Mammary epithelial cell (primary cell): ENCODE measurements at regions of chr1 and their contacts with region 1.

Region 1: DNA sequence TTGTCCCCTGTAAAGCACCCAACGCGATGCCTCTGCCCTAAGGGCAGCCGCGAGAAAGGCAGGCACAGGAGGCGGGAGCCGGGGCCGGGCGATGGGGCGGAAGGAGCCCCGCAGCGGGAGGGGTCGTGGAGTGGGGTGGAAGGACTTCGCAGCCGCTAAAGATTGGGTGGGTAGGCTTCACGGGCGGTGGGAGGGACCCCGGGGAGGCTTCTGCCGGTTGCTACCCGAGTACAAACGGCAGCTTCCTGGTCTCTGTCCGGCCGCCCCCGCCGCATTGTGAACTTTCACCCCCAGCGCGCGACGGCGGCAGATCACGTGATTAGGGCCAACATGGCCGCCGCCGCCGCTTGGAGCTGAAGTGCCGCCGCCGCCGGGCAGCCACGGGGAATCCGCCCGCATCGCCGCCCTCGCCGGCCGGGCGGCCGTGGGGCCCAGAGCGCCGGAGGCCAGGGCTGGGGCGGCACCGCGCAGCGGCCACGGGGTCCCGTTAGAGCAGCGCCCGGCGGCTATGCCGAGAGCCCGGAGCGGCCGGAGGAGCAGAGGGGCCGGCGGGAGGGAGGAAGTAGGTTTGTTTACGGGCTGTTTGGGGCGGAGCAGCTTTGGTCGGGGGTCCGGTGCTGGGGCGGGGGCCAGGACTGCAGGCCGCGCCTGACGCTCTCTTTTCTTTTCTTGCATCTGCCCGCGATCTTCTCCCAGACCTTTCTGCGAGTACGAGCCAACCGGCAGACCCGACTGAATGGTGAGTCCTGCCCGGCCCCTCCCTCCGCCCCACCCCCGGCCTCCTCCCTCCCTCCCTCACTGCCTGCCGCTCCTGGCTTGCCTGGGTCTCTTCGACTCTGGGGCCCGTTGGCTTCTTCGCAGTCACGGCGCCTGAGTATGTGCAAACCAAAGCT is 42.4 kb downstream of the TMEM53 start:
- DNase-seq: peak; percentile 77
- H3K4me3 ChIP-seq: peak overlapping the region; percentile 58 to 76 (median 69)
- H3K27ac ChIP-seq: peak overlapping the region; percentile 71
- H3K4me1 ChIP-seq: peaks cover 13% of the 10 kb centered on the region
- H3K27me3 ChIP-seq: no peaks in the 10 kb centered on the region
- CTCF ChIP-seq: no peak

Region 2: DNA sequence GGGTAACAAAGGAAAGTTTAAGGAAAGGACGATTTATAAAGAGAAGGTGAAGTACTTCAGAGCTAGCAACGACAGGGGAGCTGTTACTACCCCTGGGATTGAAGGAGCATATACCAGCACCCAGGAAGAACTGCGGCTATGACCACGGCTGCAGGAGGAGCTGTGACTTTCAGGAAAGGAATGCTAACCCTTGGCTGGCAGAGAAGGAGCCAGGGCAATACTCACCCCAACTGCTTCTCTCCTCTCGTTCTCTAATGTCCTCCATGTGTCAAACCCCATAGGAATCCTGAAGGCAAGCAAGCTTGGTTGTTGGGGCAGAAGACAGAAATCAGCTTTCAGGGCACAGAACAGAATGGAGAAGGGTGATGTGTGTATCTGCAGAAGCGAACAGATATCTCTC is 78.1 kb before region 1 on chr1:
- CTCF ChIA-PET with region 1: no interaction called
- dilution Hi-C with region 1: loop called (anchors 5 kb)
- in situ Hi-C with region 1: no loop called
- intact Hi-C with region 1: no loop called
- DNase-seq: peak; percentile 75
- H3K4me3 ChIP-seq: no peak overlapping the region
- H3K27ac ChIP-seq: peak overlapping the region; percentile 86
- H3K4me1 ChIP-seq: peaks cover 41% of the 10 kb centered on the region
- H3K27me3 ChIP-seq: no peaks in the 10 kb centered on the region
- CTCF ChIP-seq: no peak

Region 3: DNA sequence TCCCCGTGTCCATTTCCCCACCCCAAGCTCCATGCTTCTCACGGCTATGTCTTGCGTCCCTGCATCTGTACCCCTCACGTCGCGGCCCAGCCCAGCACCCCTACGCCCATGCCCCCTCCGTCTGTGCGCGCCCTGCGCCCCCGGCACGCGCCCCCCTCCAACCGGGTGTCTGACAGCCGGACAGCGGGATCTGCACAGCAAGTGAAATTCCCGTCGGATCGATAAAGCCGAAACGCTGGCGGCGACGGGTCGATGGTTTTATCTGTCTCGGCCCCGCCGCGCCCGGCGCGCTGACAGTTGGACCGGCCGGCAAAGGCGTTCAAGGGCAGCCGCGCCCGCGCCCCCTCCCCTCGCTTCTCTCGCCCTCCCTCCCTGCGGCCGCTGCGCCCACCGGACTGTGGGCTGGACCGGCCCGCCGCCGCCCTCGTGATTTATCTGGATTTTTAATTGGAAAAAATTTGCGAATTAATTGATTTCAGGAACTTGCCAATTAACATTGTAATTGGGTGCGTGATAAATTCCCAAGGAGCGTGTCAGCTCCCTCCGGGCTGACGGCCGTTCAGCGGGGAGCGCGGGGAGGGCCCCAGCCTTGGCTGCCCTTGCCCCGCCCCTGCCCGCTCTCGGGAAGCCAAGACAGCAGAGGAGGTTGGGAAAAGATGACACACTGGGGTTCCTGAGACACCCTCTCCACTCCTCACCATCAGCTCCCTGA is 14.7 kb before region 1 on chr1:
- CTCF ChIA-PET with region 1: no interaction called
- dilution Hi-C with region 1: no loop called
- in situ Hi-C with region 1: no loop called
- intact Hi-C with region 1: loop called (anchors 1 kb)
- DNase-seq: peak; percentile 52
- H3K4me3 ChIP-seq: peak overlapping the region; percentile 30 to 38 (median 37)
- H3K27ac ChIP-seq: no peak overlapping the region
- H3K4me1 ChIP-seq: peaks cover 12% of the 10 kb centered on the region
- H3K27me3 ChIP-seq: no peaks in the 10 kb centered on the region
- CTCF ChIP-seq: no peak

Region 4: GRCh38 chr1:44684525-44684924 is 52.6 kb after region 1 on chr1:
- CTCF ChIA-PET with region 1: no interaction called
- dilution Hi-C with region 1: loop called (anchors 5 kb)
- in situ Hi-C with region 1: no loop called
- intact Hi-C with region 1: no loop called
- DNase-seq: no peak
- H3K4me3 ChIP-seq: no peak overlapping the region
- H3K27ac ChIP-seq: no peak overlapping the region
- H3K4me1 ChIP-seq: no peaks in the 10 kb centered on the region
- H3K27me3 ChIP-seq: no peaks in the 10 kb centered on the region
- CTCF ChIP-seq: no peak